ENCODE measurements at regions of chr10 and their contacts with region 1.

Region 1: GRCh38 chr10:62244780-62245467 is 23.7 kb downstream of the RTKN2 start:
- DNase-seq: peak; percentile 39
- H3K4me3 Mint-ChIP-seq: no peak overlapping the region
- H3K27ac Mint-ChIP-seq: peak overlapping the region; percentile 63
- H3K4me1 Mint-ChIP-seq: peaks cover 32% of the 10 kb centered on the region
- H3K27me3 Mint-ChIP-seq: no peaks in the 10 kb centered on the region

Region 2: GRCh38 chr10:61750929-61751471 is 493.9 kb before region 1 on chr10:
- intact Hi-C with region 1: loop called (anchors 10 kb)
- DNase-seq: peak; percentile 63
- H3K4me3 Mint-ChIP-seq: peak overlapping the region; percentile 40
- H3K27ac Mint-ChIP-seq: peak overlapping the region; percentile 71
- H3K4me1 Mint-ChIP-seq: peaks cover 40% of the 10 kb centered on the region
- H3K27me3 Mint-ChIP-seq: no peaks in the 10 kb centered on the region

Region 3: DNA sequence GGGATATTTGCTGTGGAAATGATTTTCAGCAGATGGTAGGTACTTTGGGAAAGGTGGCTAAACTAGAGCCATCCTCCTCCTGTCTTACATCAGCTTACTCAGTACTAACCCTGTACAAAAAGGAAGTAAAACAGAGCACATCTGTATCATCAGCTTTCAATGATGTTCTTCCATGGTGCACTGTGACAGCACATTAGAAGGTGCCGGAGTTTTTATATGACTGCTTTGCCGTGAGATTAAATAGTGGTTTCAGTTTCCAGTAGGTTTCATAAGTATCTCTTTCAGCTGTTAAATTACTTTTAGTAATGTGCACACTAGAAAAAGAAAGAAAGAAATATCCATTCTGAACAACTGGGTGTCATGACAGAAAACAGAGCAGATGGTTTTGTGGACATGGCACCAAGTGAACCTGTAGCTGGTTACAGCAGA is 257.0 kb before region 1 on chr10:
- intact Hi-C with region 1: loop called (anchors 1 kb)
- DNase-seq: peak; percentile 36
- H3K4me3 Mint-ChIP-seq: peak overlapping the region; percentile 46
- H3K27ac Mint-ChIP-seq: peak overlapping the region; percentile 90
- H3K4me1 Mint-ChIP-seq: peaks cover 67% of the 10 kb centered on the region
- H3K27me3 Mint-ChIP-seq: no peaks in the 10 kb centered on the region

Region 4: DNA sequence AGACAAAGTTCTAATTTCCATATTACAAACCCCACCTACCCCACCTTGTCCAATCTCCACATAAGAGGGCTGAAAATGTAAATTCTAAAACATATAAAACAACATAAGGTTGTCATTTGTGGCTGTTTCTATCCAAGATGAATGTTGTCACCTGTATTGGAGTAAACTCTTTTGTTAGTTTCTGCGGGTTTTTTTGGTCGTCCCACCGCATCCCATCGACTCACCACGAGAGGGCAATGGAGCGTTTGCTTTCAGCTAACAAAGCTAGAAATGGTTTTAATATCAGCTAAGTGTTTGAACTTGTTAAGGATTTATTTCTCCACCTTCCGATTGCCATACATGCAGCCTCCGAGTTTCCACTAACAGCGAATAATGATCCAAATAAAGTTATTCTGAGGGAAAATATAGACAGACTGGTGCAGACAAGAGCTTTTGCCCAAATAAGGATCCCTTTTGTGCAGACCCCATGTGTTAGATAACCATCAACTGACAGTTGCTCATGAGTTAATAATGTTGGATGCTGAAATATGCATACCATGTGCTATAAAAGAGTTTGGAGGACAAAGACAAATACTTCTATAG is 206.2 kb before region 1 on chr10:
- intact Hi-C with region 1: loop called (anchors 1 kb)
- DNase-seq: peak; percentile 71
- H3K4me3 Mint-ChIP-seq: peak overlapping the region; percentile 51
- H3K27ac Mint-ChIP-seq: peak overlapping the region; percentile 72
- H3K4me1 Mint-ChIP-seq: peaks cover 67% of the 10 kb centered on the region
- H3K27me3 Mint-ChIP-seq: no peaks in the 10 kb centered on the region

Region 5: GRCh38 chr10:62121187-62121530 is 123.8 kb before region 1 on chr10:
- intact Hi-C with region 1: loop called (anchors 2 kb)
- DNase-seq: no peak
- H3K4me3 Mint-ChIP-seq: no peak overlapping the region
- H3K27ac Mint-ChIP-seq: peak overlapping the region; percentile 66
- H3K4me1 Mint-ChIP-seq: peaks cover 27% of the 10 kb centered on the region
- H3K27me3 Mint-ChIP-seq: no peaks in the 10 kb centered on the region

Region 6: GRCh38 chr10:62264702-62265436 is 19.9 kb after region 1 on chr10:
- intact Hi-C with region 1: no loop called
- DNase-seq: no peak
- H3K4me3 Mint-ChIP-seq: no peak overlapping the region
- H3K27ac Mint-ChIP-seq: no peak overlapping the region
- H3K4me1 Mint-ChIP-seq: peaks cover 21% of the 10 kb centered on the region
- H3K27me3 Mint-ChIP-seq: peaks cover 20% of the 10 kb centered on the region

Measured in activated T-helper 2 cell treated with anti-CD3 and anti-CD28 coated beads, Interferon-gamma antibody, Interleukin-2, Interleukin-4, amounts not matched to agents 10 μg/mL and 5 μg/mL and 100 μg/mL, durations not matched to agents 14 hours and 24 hours and 36 hours (primary cell).